ENCODE measurements at regions of chr12 and their contacts with region 1.

Region 1: DNA sequence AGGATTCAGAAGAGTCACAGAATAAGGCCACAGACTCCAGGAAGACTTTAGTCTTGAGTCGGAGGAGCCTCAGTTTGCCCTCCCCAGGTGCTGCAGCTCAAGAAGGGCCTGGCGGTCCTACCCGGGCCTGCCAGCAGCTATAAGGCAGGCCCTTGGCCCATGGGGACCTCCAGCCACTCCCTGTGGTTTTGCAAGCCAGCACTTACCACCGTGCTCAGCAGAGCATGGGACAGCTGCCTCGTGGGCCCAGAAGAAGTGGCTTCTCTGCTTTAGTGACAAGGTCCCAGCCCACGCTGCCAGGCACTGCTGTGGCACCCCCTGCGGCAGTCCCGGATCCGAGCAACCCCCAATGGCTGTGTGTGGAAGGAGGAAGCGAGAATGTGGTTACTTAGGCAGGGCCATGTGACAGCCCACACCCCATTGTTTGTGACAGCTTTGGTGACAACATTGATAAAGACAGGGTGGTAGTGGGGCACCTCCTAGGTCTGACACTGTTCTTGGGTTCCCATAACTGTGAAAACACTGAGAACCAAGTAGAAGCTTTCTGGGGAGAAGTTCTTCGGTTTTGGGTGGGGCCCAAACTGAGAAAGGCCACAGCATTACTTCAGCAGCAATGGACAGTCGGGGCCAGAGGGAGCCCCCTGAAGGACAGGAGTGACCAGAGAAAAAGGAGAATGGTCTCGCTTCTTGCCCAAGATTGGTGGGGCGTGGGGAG is at the start of gene SELPLG:
- DNase-seq: peak; percentile 93
- H3K4me3 Mint-ChIP-seq: peak within 1 kb of the TSS; percentile 97
- H3K27ac Mint-ChIP-seq: peak within 1 kb of the TSS; percentile 97
- H3K4me1 Mint-ChIP-seq: peaks cover 51% of the 10 kb centered on the region
- H3K27me3 Mint-ChIP-seq: no peaks in the 10 kb centered on the region
- total RNA-seq, gene SELPLG: 56.8 to 60.1 TPM

Region 2: DNA sequence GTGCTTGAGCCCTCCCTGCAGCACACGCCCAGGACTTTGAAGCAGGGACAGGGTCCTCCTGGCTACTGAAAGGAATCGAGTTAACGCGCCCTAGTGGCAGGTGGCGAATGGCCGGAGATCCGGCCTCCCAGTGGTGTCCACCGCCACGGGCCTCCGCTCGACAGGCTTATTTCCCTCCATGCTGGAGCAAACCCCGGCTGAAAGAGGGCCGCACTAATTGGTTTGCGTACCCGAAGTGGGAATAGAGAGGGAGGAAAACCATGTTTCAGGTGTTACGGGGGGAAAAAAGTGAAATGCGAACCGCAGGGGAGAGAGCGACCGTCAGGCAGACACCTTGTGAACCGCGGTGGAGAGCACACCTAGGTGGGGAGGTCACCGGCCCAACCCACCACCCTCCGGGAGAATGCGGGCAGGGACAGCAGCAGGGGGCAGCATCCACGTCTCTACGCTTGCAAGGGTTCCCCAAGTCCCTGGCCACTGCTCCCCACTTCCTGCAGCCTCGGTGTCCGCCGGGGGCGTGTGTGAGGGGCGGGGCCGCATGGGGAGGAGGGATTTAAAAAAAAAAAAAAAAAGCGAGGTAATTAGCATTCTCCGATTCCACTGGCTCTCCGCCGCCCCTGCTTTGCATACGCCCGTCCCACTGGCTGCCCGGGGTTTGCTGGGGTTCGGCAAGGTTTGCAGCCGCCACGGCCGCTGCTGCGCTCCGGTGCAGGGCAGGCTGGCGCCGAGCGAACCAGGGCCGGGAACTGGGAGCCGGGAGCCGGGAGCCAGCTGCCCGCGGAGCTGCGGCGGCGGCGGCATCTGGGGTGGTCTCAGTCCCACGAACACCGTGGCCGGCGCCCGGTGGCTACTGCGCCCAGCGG is 1315.7 kb before region 1 on chr12:
- CTCF ChIA-PET with region 1: no interaction called
- POLR2A ChIA-PET with region 1: no interaction called
- intact Hi-C with region 1: loop called (anchors 10 kb)
- DNase-seq: peak; percentile 93
- H3K4me3 Mint-ChIP-seq: peak overlapping the region; percentile 82
- H3K27ac Mint-ChIP-seq: no peak overlapping the region
- H3K4me1 Mint-ChIP-seq: peaks cover 26% of the 10 kb centered on the region
- H3K27me3 Mint-ChIP-seq: peaks cover 8% of the 10 kb centered on the region

Region 3: GRCh38 chr12:108562348-108563135 is 71.1 kb before region 1 on chr12 and contains the start of gene ISCU:
- CTCF ChIA-PET with region 1: interaction called, 15 read pairs
- POLR2A ChIA-PET with region 1: interaction called, 66 read pairs
- intact Hi-C with region 1: loop called (anchors 1 kb)
- DNase-seq: peak; percentile 99
- H3K4me3 Mint-ChIP-seq: peak within 1 kb of the TSS; percentile 100
- H3K27ac Mint-ChIP-seq: peak within 1 kb of the TSS; percentile 99
- H3K4me1 Mint-ChIP-seq: peaks cover 57% of the 10 kb centered on the region
- H3K27me3 Mint-ChIP-seq: no peaks in the 10 kb centered on the region
- total RNA-seq, gene ISCU: 88.6 to 94.3 TPM

Region 4: DNA sequence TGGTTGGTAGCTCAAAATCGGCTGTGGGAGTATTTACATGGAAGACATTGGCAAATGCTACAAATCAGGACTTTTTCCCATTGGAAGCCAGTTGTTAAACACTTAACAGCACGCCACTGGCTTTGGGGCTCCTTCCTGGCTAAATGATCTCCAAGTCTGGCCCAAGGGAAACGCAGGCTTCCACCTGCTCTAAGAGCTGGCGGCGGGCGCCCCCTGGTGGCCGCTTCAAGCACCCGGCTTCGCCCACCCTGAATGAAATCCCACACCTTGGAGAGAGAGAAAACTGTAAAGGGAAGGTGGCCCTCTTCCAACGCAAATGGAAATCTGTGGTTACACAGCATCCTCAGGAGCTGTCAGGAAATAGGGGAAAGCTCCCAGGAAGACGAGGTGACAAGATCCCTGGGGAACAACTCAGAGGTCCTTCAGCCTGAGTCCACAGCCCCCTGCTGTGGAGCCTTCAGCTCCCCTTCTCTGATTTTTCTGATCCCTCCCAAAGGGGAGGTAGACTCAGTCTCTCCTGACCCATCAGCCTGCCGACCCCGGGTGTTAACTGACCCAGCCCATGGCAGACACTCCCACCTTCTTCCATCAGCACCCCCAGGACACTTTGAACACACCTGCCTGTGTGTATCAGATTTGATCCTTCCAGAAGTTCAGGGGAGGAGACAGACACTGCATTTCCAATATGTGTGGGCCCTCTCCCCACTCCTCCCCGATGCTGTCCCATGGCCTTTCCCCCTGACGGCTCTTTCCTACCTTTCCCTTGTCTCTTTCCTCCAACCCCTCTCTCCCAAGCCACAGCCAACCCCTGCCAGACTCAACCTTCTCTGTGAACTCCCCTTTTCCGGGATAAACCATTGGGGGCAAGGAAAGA is 15.4 kb before region 1 on chr12:
- CTCF ChIA-PET with region 1: interaction called, 207 read pairs
- POLR2A ChIA-PET with region 1: interaction called, 24 read pairs
- intact Hi-C with region 1: loop called (anchors 1 kb)
- DNase-seq: peak; percentile 84
- H3K4me3 Mint-ChIP-seq: no peak overlapping the region
- H3K27ac Mint-ChIP-seq: peak overlapping the region; percentile 25
- H3K4me1 Mint-ChIP-seq: peaks cover 54% of the 10 kb centered on the region
- H3K27me3 Mint-ChIP-seq: no peaks in the 10 kb centered on the region

Region 5: DNA sequence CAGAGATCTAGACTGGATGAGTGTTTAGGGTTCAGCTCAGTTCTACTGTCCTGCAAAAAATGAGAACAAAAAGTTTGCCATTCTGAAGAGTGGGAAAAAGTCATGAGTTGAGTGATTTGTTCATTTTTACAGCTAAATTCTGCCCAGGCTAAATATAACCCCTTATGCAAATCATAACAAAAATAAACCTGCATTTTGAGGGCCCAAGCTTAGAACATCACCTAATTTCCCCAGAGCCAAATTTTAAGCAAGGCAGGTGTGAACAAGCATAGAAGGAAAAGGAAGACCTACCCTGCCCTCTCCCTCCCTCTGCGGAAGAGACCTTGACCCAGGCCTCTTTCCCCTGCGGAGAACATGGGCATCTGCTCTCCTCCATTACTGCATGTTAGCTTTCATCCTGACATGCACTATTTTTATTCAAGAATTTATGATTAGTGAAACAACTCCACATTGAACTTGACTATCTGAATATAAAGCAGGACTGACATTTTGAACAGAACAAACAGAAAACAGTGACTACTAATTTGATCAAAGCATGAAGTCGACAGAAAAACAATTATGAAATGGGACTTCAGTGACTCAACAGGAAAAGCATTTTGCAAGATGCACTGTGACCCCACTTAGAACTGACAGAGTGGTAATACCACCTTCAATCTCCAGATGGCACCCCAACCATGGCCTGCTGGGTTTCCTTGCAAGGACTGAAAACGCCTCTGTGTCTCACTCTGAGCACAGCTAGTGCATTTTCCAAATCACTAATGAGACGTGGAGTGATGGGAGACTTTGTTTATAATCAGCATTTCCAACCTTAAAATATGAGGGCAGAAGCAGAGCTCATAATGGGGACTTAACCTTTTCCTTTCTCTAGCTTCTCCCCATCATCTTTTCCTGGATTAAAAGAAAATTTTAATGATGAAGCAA is 30.9 kb after region 1 on chr12:
- CTCF ChIA-PET with region 1: interaction called, 34 read pairs
- POLR2A ChIA-PET with region 1: interaction called, 4 read pairs
- intact Hi-C with region 1: loop called (anchors 1 kb)
- DNase-seq: peak; percentile 92
- H3K4me3 Mint-ChIP-seq: peak overlapping the region; percentile 33
- H3K27ac Mint-ChIP-seq: peak overlapping the region; percentile 83
- H3K4me1 Mint-ChIP-seq: peaks cover 23% of the 10 kb centered on the region
- H3K27me3 Mint-ChIP-seq: no peaks in the 10 kb centered on the region

Region 6: GRCh38 chr12:108731105-108731865 is 97.6 kb after region 1 on chr12 and contains the start of gene CORO1C:
- CTCF ChIA-PET with region 1: no interaction called
- POLR2A ChIA-PET with region 1: interaction called, 4 read pairs
- intact Hi-C with region 1: loop called (anchors 1 kb)
- DNase-seq: peak; percentile 97
- H3K4me3 Mint-ChIP-seq: peak within 1 kb of the TSS; percentile 91
- H3K27ac Mint-ChIP-seq: peak within 1 kb of the TSS; percentile 91
- H3K4me1 Mint-ChIP-seq: peaks cover 34% of the 10 kb centered on the region
- H3K27me3 Mint-ChIP-seq: no peaks in the 10 kb centered on the region
- total RNA-seq, gene CORO1C: 62.1 to 70.9 TPM

Region 7: DNA sequence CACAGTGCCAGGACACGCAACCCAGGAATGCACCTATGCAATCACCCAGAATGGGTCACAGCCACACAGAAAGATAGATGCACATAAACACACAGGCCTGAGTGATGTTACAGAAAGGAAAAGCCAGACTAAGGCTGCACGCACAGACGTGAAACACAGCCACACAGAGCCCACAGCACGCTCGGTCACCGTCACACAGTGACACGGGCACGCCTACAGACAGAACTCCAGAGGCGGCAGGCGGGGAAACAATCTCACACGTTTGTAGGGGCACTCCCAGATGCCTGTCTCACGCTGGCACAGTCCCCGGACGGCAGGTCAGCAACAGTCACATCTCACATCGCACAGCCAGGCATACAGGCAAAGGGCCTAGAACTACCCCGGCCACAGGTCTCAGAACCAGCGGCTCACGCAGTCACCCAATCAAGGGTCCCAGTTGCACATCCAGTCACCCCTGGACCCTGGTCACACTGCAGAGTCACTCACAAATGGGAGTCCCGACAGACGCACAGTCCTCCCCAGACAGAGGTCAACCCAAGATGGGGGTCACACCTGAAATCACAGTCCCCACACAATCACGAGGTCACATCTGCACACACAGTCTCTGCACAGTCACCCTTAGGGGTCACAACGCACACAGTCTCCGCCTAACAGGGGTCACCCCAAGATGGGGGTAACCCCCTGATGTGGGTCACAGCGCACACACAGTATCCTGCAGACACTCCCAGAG is 222.9 kb after region 1 on chr12:
- CTCF ChIA-PET with region 1: no interaction called
- POLR2A ChIA-PET with region 1: interaction called, 5 read pairs
- intact Hi-C with region 1: loop called (anchors 1 kb)
- DNase-seq: peak; percentile 82
- H3K4me3 Mint-ChIP-seq: peak overlapping the region; percentile 97
- H3K27ac Mint-ChIP-seq: peak overlapping the region; percentile 92
- H3K4me1 Mint-ChIP-seq: peaks cover 53% of the 10 kb centered on the region
- H3K27me3 Mint-ChIP-seq: peaks cover 2% of the 10 kb centered on the region

Measured in activated CD4-positive, alpha-beta memory T cell treated with anti-CD3 and anti-CD28 coated beads for 36 hours (primary cell).